ENCODE measurements at regions of chr10 and their contacts with region 1.

Region 1: GRCh38 chr10:9209105-9209798 is 1154.8 kb downstream of the GATA3 start:
- DNase-seq: no peak
- ATAC-seq: peak in 1 of 2 donors; percentile 54
- H3K4me3 ChIP-seq: no peak overlapping the region
- H3K27ac ChIP-seq: no peak overlapping the region
- H3K4me1 ChIP-seq: no peaks in the 10 kb centered on the region
- H3K27me3 ChIP-seq: peaks cover 5% of the 10 kb centered on the region
- CTCF ChIP-seq: peak; percentile 87

Region 2: DNA sequence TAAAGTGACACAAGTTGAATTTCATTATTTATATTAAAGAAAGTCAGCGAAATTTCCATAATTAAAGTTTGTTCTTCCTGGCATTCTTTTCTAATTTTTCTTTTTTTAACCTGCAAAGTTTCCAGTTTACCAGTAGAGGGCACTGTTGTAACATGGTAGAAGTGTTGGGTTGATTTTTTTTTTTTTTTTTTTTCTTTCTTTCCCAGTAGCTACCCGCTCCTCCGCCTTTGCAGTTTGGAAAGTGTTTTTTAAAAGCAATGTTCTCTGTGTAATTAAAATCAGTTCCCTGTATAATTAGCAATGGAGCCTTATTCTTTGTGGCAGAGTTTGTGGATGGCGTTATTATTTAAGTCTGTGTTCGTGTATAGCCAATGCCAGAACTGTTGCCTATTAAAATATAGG is 1337.2 kb before region 1 on chr10:
- intact Hi-C with region 1: loop called (anchors 5 kb)
- DNase-seq: no peak
- ATAC-seq: peak in 1 of 2 donors; percentile 46
- H3K4me3 ChIP-seq: peak overlapping the region; percentile 36
- H3K27ac ChIP-seq: no peak overlapping the region
- H3K4me1 ChIP-seq: peaks cover 4% of the 10 kb centered on the region
- H3K27me3 ChIP-seq: no peaks in the 10 kb centered on the region
- CTCF ChIP-seq: peak; percentile 83

Region 3: DNA sequence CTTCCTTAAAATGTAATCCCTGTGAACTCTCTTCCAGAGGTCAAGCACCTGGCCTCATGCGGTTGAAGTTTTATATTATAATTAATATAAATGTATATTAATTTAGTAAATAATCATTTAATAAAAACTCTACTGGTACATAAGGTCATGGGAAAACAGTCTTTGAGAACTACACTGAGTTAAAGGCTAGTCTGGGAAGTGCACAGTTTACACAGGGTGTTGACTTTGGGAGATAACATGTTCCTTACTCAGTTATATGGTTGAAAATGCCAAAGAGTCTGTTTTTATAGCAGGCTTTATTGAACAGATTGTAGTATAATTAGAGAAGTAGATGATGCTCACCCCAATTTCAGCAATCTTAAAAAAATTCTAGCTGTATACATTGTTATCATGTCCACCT is 418.9 kb before region 1 on chr10:
- intact Hi-C with region 1: no loop called
- DNase-seq: no peak
- ATAC-seq: no peak
- H3K4me3 ChIP-seq: no peak overlapping the region
- H3K27ac ChIP-seq: no peak overlapping the region
- H3K4me1 ChIP-seq: no peaks in the 10 kb centered on the region
- H3K27me3 ChIP-seq: no peaks in the 10 kb centered on the region
- CTCF ChIP-seq: no peak

Measured in lower lobe of right lung (tissue), 2 donors.